Ascending aorta (tissue), 2 donors: ENCODE measurements at regions of chr10 and their contacts with region 1.

Region 1: GRCh38 chr10:14736600-14737081 is 38.1 kb downstream of the FAM107B start:
- DNase-seq: no peak
- H3K4me3 ChIP-seq: no peak overlapping the region
- H3K27ac ChIP-seq: peak overlapping the region; percentile 82 to 87
- H3K4me1 ChIP-seq: peaks cover 13 to 38% of the 10 kb centered on the region in 2 donors
- H3K27me3 ChIP-seq: no peaks in the 10 kb centered on the region
- CTCF ChIP-seq: no peak

Region 2: DNA sequence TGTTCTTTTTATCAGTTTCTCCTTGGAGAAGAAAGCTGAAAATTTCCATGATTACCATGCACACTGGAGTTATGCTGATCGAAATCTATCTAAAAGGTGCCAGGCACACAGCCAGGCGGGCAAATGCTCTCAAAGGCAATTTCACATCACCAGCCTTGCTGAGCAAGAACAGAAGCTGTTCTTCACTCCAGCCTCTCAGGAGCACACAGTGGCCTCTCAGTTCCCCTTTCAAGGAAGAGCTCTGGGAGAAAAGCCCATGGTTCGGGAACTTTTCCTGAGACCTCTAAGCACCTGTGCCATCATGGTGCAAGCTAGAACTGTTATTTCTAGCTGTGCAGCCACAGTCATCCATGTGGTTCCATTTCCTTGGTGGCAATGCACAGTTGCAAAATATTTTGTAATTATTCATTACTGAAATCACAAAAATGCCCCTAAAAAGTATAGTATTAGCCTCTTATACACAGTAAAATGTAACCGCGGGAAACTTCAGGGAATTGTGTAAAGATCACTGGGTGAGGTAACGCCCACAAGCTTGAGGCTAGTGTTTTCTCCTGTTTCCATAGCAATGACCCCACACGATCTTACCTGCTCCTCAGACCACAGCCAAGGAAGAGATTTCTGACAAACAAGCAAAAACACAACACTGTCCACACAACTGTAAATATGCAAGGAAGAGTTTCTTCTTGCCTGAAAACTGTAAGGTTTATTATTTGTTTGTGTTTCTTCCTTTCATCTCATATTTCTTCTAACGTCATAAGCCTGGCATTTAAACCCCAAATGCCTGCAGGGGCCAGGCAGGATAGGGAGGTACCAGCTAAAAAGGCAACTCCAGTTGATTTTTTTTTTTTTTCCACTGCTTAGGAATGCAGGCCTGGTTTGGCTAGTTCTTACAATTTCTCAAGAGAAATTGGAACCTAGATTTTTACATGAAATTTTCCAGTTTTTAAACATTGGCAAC is 83.1 kb before region 1 on chr10:
- intact Hi-C with region 1: loop called (anchors 5 kb)
- DNase-seq: no peak
- H3K4me3 ChIP-seq: peak overlapping the region in 1 of 2 donors; percentile 7
- H3K27ac ChIP-seq: peak overlapping the region; percentile 67 to 80
- H3K4me1 ChIP-seq: peaks cover 8 to 17% of the 10 kb centered on the region in 2 donors
- H3K27me3 ChIP-seq: no peaks in the 10 kb centered on the region
- CTCF ChIP-seq: no peak

Region 3: GRCh38 chr10:14959276-14960057 is 222.8 kb after region 1 on chr10 and contains the start of gene MEIG1:
- intact Hi-C with region 1: loop called (anchors 10 kb)
- DNase-seq: peak; percentile 76 to 97
- H3K4me3 ChIP-seq: peak within 1 kb of the TSS; percentile 76 to 92
- H3K27ac ChIP-seq: peak within 1 kb of the TSS; percentile 92 to 97
- H3K4me1 ChIP-seq: peaks cover 0 to 3% of the 10 kb centered on the region in 2 donors
- H3K27me3 ChIP-seq: no peaks in the 10 kb centered on the region
- CTCF ChIP-seq: no peak
- total RNA-seq, gene MEIG1: not detected